Activated CD4-positive, alpha-beta T cell treated with anti-CD3 and anti-CD28 coated beads, Interleukin-2, amount 10 ng/mL, durations not matched to agents 24 days and 14 days (primary cell): ENCODE measurements at regions of chr3 and their contacts with region 1.

Region 1: GRCh38 chr3:157130467-157131251 is 29.3 kb downstream of the CCNL1 start:
- DNase-seq: peak; percentile 91
- H3K4me3 Mint-ChIP-seq: peak overlapping the region; percentile 78
- H3K27ac Mint-ChIP-seq: peak overlapping the region; percentile 98
- H3K4me1 Mint-ChIP-seq: peaks cover 82% of the 10 kb centered on the region
- H3K27me3 Mint-ChIP-seq: no peaks in the 10 kb centered on the region

Region 2: GRCh38 chr3:156554842-156555687 is 575.6 kb before region 1 on chr3 and contains the start of gene SSR3:
- intact Hi-C with region 1: loop called (anchors 2 kb)
- DNase-seq: peak; percentile 100
- H3K4me3 Mint-ChIP-seq: peak within 1 kb of the TSS; percentile 97
- H3K27ac Mint-ChIP-seq: peak within 1 kb of the TSS; percentile 96
- H3K4me1 Mint-ChIP-seq: peaks cover 48% of the 10 kb centered on the region
- H3K27me3 Mint-ChIP-seq: no peaks in the 10 kb centered on the region
- total RNA-seq, gene SSR3: 151 and 153 TPM in 2 replicates

Region 3: DNA sequence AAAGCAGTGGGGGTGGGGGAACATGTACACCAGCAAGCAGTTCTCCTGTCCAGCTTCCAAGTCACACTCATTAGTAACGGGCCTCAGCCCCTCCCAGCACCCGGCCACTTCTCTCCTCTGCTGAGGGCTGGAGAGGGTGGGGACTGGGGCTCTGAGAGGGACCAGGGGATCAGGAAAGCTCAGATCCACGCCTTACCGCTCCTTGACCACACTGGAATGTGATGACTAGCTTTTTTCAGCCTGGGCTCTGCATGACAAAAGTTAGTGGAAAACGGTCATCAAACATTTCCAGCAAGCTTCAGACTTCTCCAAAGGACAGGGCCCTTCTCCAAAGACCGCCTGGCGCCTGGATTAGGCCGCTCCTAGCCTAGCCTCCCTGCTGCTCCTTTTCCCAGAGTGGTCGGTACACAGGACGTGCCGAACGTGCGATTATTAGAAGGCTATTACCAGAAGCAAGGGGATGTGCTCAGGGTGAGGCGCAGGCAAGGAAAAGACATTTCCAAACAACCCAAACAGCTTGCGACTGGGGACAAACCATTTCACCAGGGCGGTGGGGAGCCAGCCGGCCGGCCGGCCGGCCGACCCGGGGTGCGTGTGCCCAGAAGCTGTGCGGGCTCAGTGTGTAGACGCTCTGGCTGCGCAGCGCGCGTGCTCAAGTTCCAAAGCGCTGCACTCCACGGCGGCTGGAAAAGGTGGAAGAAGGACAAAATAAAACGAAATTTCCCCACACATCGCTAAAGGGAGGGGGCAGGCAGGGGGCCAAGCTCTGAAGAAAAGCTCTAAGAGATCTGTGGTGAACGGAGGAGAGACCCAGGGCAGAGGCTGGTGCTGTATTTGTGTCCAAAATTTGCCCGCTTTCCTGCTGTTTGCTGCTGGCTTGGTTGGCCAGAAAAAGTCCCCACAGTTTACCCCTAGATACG is 524.7 kb before region 1 on chr3:
- intact Hi-C with region 1: loop called (anchors 5 kb)
- DNase-seq: no peak
- H3K4me3 Mint-ChIP-seq: peak overlapping the region; percentile 86
- H3K27ac Mint-ChIP-seq: no peak overlapping the region
- H3K4me1 Mint-ChIP-seq: peaks cover 33% of the 10 kb centered on the region
- H3K27me3 Mint-ChIP-seq: peaks cover 22% of the 10 kb centered on the region

Region 4: GRCh38 chr3:156816800-156817645 is 313.6 kb before region 1 on chr3:
- intact Hi-C with region 1: loop called (anchors 1 kb)
- DNase-seq: peak; percentile 97
- H3K4me3 Mint-ChIP-seq: peak overlapping the region; percentile 92
- H3K27ac Mint-ChIP-seq: peak overlapping the region; percentile 98
- H3K4me1 Mint-ChIP-seq: peaks cover 52% of the 10 kb centered on the region
- H3K27me3 Mint-ChIP-seq: no peaks in the 10 kb centered on the region

Region 5: GRCh38 chr3:157103280-157103679 is 27.4 kb before region 1 on chr3:
- intact Hi-C with region 1: loop called (anchors 1 kb)
- DNase-seq: peak; percentile 67
- H3K4me3 Mint-ChIP-seq: peak overlapping the region; percentile 62
- H3K27ac Mint-ChIP-seq: peak overlapping the region; percentile 89
- H3K4me1 Mint-ChIP-seq: peaks cover 44% of the 10 kb centered on the region
- H3K27me3 Mint-ChIP-seq: no peaks in the 10 kb centered on the region

Region 6: DNA sequence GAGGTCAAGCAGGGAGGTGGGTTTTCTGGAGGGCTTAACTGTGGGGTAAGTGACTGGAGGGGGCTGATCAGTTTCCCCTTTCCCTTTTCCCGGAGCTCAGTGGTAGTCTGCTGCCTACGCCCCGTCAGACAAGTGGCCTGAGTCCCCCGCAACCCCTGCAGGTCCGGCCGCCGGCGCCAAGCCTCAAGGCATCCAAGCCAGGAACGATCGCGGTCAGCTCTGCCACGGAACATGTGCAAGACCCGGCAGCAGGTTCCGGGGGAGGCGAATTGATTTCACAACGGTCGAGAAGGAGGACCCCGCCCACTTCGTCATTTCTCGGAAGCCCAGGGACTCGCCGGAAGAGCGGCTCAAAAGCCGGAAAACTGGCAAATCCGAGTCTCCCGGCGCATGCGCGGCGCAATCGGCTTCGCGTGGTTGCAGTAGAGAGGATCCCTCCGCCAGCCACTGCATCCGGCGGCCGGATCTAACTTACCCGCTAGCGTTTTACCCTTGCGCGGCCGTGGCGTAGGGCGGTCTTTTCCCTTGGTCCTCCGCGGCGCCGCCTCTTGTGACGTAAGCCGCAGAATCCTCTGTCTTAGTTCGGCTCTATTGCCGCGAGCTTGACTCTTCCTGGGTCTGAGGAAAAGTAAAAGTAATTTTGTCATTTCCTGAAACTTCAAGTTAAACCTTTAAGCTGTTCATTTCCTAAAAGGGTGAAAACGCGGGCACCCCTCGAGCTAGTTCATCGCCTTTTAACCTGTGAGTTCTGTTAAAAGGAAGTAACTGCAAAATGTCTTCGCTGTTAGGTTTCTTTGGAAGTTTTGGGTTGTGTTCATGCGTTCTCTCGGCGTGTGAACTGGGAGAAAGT is 44.2 kb after region 1 on chr3:
- intact Hi-C with region 1: loop called (anchors 1 kb)
- DNase-seq: peak; percentile 99
- H3K4me3 Mint-ChIP-seq: peak overlapping the region; percentile 89
- H3K27ac Mint-ChIP-seq: peak overlapping the region; percentile 99
- H3K4me1 Mint-ChIP-seq: peaks cover 25% of the 10 kb centered on the region
- H3K27me3 Mint-ChIP-seq: peaks cover 2% of the 10 kb centered on the region

Region 7: GRCh38 chr3:157199841-157200240 is 69.2 kb after region 1 on chr3:
- intact Hi-C with region 1: no loop called
- DNase-seq: no peak
- H3K4me3 Mint-ChIP-seq: no peak overlapping the region
- H3K27ac Mint-ChIP-seq: no peak overlapping the region
- H3K4me1 Mint-ChIP-seq: no peaks in the 10 kb centered on the region
- H3K27me3 Mint-ChIP-seq: peaks cover 11% of the 10 kb centered on the region